PC-9 (cell line): ENCODE measurements at regions of chr1 and their contacts with region 1.

Region 1: DNA sequence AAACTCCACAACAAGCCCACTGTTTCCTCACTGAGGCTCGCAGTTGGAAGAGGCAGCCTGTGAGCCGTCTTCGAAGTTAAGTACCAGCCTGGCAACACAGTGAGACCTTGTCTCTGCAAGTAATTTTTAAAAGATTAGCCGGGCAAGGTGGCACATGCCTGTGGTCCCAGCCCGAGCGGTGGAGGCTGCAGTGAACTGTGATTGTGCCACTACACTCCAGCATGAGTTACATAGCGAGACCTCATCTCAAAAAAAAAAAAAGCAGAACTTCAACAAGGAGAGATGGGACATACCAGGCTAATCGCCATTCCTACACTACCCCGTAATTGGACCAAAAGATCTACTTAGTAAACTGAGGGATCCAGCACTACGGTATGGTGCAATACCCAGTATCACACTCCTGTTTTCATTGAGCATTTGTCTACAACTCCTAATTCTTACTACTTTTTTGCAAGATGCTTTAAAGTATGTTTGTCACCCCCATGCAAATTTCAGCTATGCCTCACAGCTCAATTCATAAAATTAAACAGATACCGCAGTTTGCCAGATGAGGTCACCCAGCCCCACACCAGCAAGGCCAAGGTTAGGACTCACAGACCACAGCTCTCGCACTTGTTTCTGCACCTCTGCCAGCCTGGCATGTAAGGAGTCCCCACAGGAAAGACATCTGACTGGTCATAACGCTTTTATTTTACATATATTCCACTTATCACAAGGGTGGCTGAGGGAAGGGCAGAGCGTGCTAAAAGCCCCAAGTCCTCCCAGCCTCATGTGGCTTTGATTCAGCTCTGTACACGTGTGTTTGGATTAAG is 21.0 kb downstream of the SDE2 start:
- DNase-seq: no peak
- H3K4me3 ChIP-seq: no peak overlapping the region
- H3K27ac ChIP-seq: no peak overlapping the region
- H3K4me1 ChIP-seq: no peaks in the 10 kb centered on the region
- H3K27me3 ChIP-seq: no peaks in the 10 kb centered on the region
- CTCF ChIP-seq: no peak

Region 2: GRCh38 chr1:225318706-225319575 is 659.2 kb before region 1 on chr1:
- CTCF ChIA-PET with region 1: no interaction called
- POLR2A ChIA-PET with region 1: no interaction called
- intact Hi-C with region 1: loop called (anchors 10 kb)
- DNase-seq: peak; percentile 20 to 51
- H3K4me3 ChIP-seq: no peak overlapping the region
- H3K27ac ChIP-seq: no peak overlapping the region
- H3K4me1 ChIP-seq: peaks cover 13% of the 10 kb centered on the region
- H3K27me3 ChIP-seq: no peaks in the 10 kb centered on the region
- CTCF ChIP-seq: peak; percentile 80

Region 3: GRCh38 chr1:225474986-225475820 is 502.9 kb before region 1 on chr1:
- CTCF ChIA-PET with region 1: no interaction called
- POLR2A ChIA-PET with region 1: no interaction called
- intact Hi-C with region 1: loop called (anchors 1 kb)
- DNase-seq: peak; percentile 54 to 86
- H3K4me3 ChIP-seq: no peak overlapping the region; the same call in 1 of the 2 replicates
- H3K27ac ChIP-seq: no peak overlapping the region
- H3K4me1 ChIP-seq: peaks cover 8% of the 10 kb centered on the region
- H3K27me3 ChIP-seq: no peaks in the 10 kb centered on the region
- CTCF ChIP-seq: peak; percentile 100

Region 4: GRCh38 chr1:225554216-225554812 is 423.8 kb before region 1 on chr1:
- CTCF ChIA-PET with region 1: no interaction called
- POLR2A ChIA-PET with region 1: no interaction called
- intact Hi-C with region 1: loop called (anchors 10 kb)
- DNase-seq: no peak
- H3K4me3 ChIP-seq: no peak overlapping the region
- H3K27ac ChIP-seq: 0 out of 2 replicates have a peak overlapping the region, but pooled peaks have one; percentile 25
- H3K4me1 ChIP-seq: no peaks in the 10 kb centered on the region
- H3K27me3 ChIP-seq: no peaks in the 10 kb centered on the region
- CTCF ChIP-seq: peak; percentile 78

Region 5: DNA sequence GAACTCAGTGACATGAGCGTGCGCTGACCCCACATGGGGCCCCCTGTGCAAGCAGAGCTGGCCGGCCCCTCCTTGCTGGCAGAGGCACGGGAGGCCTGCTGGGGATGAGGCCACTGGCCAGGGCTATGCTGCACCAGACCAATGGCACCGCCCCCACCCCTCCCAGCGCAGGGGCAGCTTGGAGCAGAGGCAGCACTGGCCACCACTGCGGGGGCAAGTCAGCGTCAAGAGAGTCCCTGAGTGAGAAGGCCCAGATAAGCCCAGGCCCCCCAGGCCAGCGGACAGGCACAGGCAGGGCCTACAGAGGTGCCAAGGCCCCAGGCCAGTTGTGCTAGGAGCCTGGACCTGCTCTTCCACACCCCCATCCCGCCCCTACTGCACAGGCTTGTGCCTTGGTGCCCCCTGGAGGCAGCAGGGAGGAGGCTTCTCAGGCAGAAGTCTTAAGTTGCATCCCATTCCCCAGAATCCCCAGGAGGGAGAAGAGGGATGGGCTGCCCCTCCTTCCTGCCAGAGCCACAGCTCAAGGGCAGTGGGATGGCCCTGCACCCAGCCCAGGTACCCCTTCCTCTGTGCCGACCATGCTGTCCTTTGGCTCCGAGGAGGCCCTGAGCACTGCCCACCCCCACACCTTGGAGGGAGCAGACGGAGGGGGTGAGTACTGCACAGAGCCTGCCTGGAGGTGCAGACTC is 132.4 kb before region 1 on chr1:
- CTCF ChIA-PET with region 1: no interaction called
- POLR2A ChIA-PET with region 1: interaction called, 3 read pairs
- intact Hi-C with region 1: loop called (anchors 10 kb)
- DNase-seq: peak; percentile 68 to 80
- H3K4me3 ChIP-seq: no peak overlapping the region
- H3K27ac ChIP-seq: no peak overlapping the region
- H3K4me1 ChIP-seq: no peaks in the 10 kb centered on the region
- H3K27me3 ChIP-seq: no peaks in the 10 kb centered on the region
- CTCF ChIP-seq: peak; percentile 81

Region 6: GRCh38 chr1:225881969-225882693 is 96.0 kb before region 1 on chr1 and contains the start of gene TMEM63A:
- CTCF ChIA-PET with region 1: interaction called, 3 read pairs
- POLR2A ChIA-PET with region 1: no interaction called
- intact Hi-C with region 1: loop called (anchors 2 kb)
- DNase-seq: peak; percentile 75 to 95
- H3K4me3 ChIP-seq: peak within 1 kb of the TSS; percentile 92
- H3K27ac ChIP-seq: peak within 1 kb of the TSS; percentile 75
- H3K4me1 ChIP-seq: peaks cover 57% of the 10 kb centered on the region
- H3K27me3 ChIP-seq: no peaks in the 10 kb centered on the region
- CTCF ChIP-seq: no peak; the same call in 1 of the 2 replicates
- total RNA-seq, gene TMEM63A: 115 and 126 TPM in 2 replicates

Region 7: GRCh38 chr1:225923692-225924555 is 54.2 kb before region 1 on chr1 and contains the start of gene PYCR2:
- CTCF ChIA-PET with region 1: interaction called, 7 read pairs
- POLR2A ChIA-PET with region 1: interaction called, 3 read pairs
- intact Hi-C with region 1: loop called (anchors 5 kb)
- DNase-seq: peak; percentile 86 to 99
- H3K4me3 ChIP-seq: peak within 1 kb of the TSS; percentile 100
- H3K27ac ChIP-seq: peak within 1 kb of the TSS; percentile 72
- H3K4me1 ChIP-seq: peaks cover 16% of the 10 kb centered on the region
- H3K27me3 ChIP-seq: no peaks in the 10 kb centered on the region
- CTCF ChIP-seq: no peak
- total RNA-seq, gene PYCR2: 100 and 112 TPM in 2 replicates